Activated CD8-positive, alpha-beta T cell treated with anti-CD3 and anti-CD28 coated beads for 36 hours (primary cell): ENCODE measurements at regions of chr6 and their contacts with region 1.

Region 1: GRCh38 chr6:154276810-154277628 is 79.6 kb downstream of the IPCEF1 start:
- DNase-seq: peak; percentile 12
- ATAC-seq: peak; percentile 74
- H3K4me3 Mint-ChIP-seq: peak overlapping the region; percentile 57
- H3K27ac Mint-ChIP-seq: peak overlapping the region; percentile 79
- H3K4me1 Mint-ChIP-seq: peaks cover 39% of the 10 kb centered on the region
- H3K27me3 Mint-ChIP-seq: no peaks in the 10 kb centered on the region
- CTCF ChIP-seq: peak; percentile 66

Region 2: DNA sequence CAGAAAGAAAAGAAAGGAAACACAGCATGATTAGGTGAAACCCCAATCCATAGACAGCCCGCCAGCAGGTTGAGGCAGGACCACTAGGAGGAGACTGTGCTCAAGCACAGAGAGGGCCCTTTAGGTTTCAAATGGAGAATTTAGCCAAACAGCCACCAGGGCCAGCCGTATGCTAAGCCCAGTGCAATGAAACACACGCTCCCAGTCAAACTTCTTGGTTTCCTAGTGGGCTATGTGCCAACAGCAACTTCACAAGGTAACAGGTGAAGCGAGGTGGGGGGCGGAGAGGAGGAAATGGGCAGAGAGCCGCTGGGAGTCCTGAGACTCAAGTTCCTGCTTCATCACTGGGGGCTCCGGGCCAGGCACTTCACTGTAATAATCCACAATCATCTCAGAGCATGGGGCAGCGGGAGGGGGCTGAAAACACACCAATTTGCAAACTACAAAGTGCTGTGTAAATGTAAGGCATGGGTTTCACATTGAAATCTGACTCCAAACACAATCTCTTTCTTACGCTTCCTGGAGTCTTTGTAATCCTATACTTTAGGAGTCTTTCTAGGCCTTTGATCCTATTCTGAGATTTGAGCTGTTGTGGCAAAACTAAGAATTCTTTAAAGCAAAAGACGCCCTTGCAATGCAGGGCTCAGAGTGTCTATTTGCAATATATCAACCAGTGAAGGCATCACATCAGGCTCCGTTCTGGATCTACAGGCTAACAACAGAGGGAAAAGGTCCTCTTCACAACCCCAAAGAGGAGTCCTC is 120.7 kb before region 1 on chr6:
- CTCF ChIA-PET with region 1: interaction called, 137 read pairs
- POLR2A ChIA-PET with region 1: interaction called, 3 read pairs
- intact Hi-C with region 1: loop called (anchors 1 kb)
- DNase-seq: peak; percentile 86
- ATAC-seq: peak; percentile 94
- H3K4me3 Mint-ChIP-seq: peak overlapping the region; percentile 58
- H3K27ac Mint-ChIP-seq: peak overlapping the region; percentile 90
- H3K4me1 Mint-ChIP-seq: peaks cover 47% of the 10 kb centered on the region
- H3K27me3 Mint-ChIP-seq: no peaks in the 10 kb centered on the region
- CTCF ChIP-seq: peak; percentile 91

Region 3: DNA sequence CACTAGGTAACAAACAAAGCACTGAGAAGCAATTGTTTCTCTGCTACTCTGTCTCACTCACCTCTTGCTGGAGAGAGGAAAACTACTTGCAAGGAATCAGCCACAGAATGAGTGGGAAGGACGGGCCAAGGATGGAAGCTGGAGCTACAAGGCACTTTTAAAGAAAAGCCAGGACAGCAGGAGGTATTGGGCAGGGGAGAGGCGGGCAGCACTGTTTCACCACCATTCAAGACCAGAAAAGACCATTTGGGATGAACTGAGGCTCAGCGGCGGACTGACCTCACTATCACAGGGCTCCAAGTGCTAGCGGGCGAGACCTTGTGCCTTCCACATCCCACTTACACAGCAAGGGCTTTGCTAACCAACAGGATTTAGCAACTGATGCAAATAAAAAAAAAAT is 57.8 kb before region 1 on chr6:
- CTCF ChIA-PET with region 1: interaction called, 13 read pairs
- POLR2A ChIA-PET with region 1: no interaction called
- intact Hi-C with region 1: no loop called
- DNase-seq: no peak
- ATAC-seq: no peak
- H3K4me3 Mint-ChIP-seq: peak overlapping the region; percentile 9
- H3K27ac Mint-ChIP-seq: peak overlapping the region; percentile 71
- H3K4me1 Mint-ChIP-seq: peaks cover 79% of the 10 kb centered on the region
- H3K27me3 Mint-ChIP-seq: no peaks in the 10 kb centered on the region
- CTCF ChIP-seq: no peak

Region 4: GRCh38 chr6:154247119-154247861 is 29.7 kb before region 1 on chr6:
- CTCF ChIA-PET with region 1: interaction called, 42 read pairs
- POLR2A ChIA-PET with region 1: interaction called, 4 read pairs
- intact Hi-C with region 1: loop called (anchors 2 kb)
- DNase-seq: peak; percentile 78
- ATAC-seq: peak; percentile 62
- H3K4me3 Mint-ChIP-seq: peak overlapping the region; percentile 93
- H3K27ac Mint-ChIP-seq: peak overlapping the region; percentile 99
- H3K4me1 Mint-ChIP-seq: peaks cover 71% of the 10 kb centered on the region
- H3K27me3 Mint-ChIP-seq: no peaks in the 10 kb centered on the region
- CTCF ChIP-seq: no peak

Region 5: GRCh38 chr6:154258064-154258757 is 18.8 kb before region 1 on chr6:
- CTCF ChIA-PET with region 1: interaction called, 21 read pairs
- POLR2A ChIA-PET with region 1: interaction called, 3 read pairs
- intact Hi-C with region 1: no loop called
- DNase-seq: no peak
- ATAC-seq: peak; percentile 59
- H3K4me3 Mint-ChIP-seq: no peak overlapping the region
- H3K27ac Mint-ChIP-seq: peak overlapping the region; percentile 2
- H3K4me1 Mint-ChIP-seq: peaks cover 39% of the 10 kb centered on the region
- H3K27me3 Mint-ChIP-seq: no peaks in the 10 kb centered on the region
- CTCF ChIP-seq: no peak

Region 6: GRCh38 chr6:154301839-154302752 is 25.1 kb after region 1 on chr6:
- CTCF ChIA-PET with region 1: interaction called, 12 read pairs
- POLR2A ChIA-PET with region 1: no interaction called
- intact Hi-C with region 1: no loop called
- DNase-seq: peak; percentile 63
- ATAC-seq: peak; percentile 95
- H3K4me3 Mint-ChIP-seq: no peak overlapping the region
- H3K27ac Mint-ChIP-seq: no peak overlapping the region
- H3K4me1 Mint-ChIP-seq: peaks cover 15% of the 10 kb centered on the region
- H3K27me3 Mint-ChIP-seq: no peaks in the 10 kb centered on the region
- CTCF ChIP-seq: no peak

Region 7: GRCh38 chr6:154370545-154370944 is 93.5 kb after region 1 on chr6:
- CTCF ChIA-PET with region 1: interaction called, 24 read pairs
- POLR2A ChIA-PET with region 1: no interaction called
- intact Hi-C with region 1: no loop called
- DNase-seq: peak; percentile 36
- ATAC-seq: peak; percentile 53
- H3K4me3 Mint-ChIP-seq: no peak overlapping the region
- H3K27ac Mint-ChIP-seq: no peak overlapping the region
- H3K4me1 Mint-ChIP-seq: peaks cover 13% of the 10 kb centered on the region
- H3K27me3 Mint-ChIP-seq: no peaks in the 10 kb centered on the region
- CTCF ChIP-seq: peak; percentile 61